Astrocyte of the cerebellum (primary cell): ENCODE measurements at regions of chr6 and their contacts with region 1.

Region 1: GRCh38 chr6:113246186-113246585 is 611.0 kb upstream of the MARCKS start:
- DNase-seq: no peak
- H3K4me3 ChIP-seq: no peak overlapping the region
- CTCF ChIP-seq: no peak

Region 2: GRCh38 chr6:113089056-113089455 is 157.1 kb before region 1 on chr6:
- in situ Hi-C with region 1: no loop called
- DNase-seq: no peak
- H3K4me3 ChIP-seq: no peak overlapping the region
- CTCF ChIP-seq: no peak

Region 3: DNA sequence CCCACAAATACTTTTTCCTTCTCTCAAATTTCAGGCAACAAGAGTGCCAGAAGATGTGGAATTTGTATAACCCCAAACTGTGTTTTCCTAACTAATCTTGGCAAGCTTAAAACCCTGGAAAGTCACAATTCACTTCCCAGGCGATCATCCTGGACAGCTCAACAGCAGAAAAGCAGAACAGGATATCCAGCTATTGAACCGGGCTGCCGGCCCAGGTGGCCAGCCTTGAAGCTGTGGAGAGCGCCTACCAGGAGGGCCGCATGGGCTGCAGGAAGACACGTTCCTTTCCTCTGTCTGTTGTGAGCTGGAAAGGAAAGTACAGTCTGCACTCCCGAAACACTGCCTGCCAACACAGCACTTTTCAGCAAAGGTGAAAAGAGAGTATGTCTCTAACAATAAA is 108.8 kb before region 1 on chr6:
- in situ Hi-C with region 1: loop called (anchors 5 kb)
- DNase-seq: peak; percentile 33
- H3K4me3 ChIP-seq: no peak overlapping the region
- CTCF ChIP-seq: no peak

Region 4: GRCh38 chr6:113190167-113190566 is 56.0 kb before region 1 on chr6:
- in situ Hi-C with region 1: loop called (anchors 5 kb)
- DNase-seq: no peak
- H3K4me3 ChIP-seq: no peak overlapping the region
- CTCF ChIP-seq: no peak

Region 5: GRCh38 chr6:113208726-113209125 is 37.5 kb before region 1 on chr6:
- in situ Hi-C with region 1: no loop called
- DNase-seq: no peak
- H3K4me3 ChIP-seq: no peak overlapping the region
- CTCF ChIP-seq: no peak